Ovary (tissue), 10 donors: ENCODE measurements at regions of chr2 and their contacts with region 1.

Region 1: GRCh38 chr2:69012310-69013141 is 453 bp upstream of the ANTXR1 start:
- DNase-seq: peak; percentile 80 to 89 (median 87)
- H3K4me3 ChIP-seq: peak overlapping the region; percentile 88
- H3K27ac ChIP-seq: peak overlapping the region; percentile 64 to 86
- H3K4me1 ChIP-seq: peaks cover 6% of the 10 kb centered on the region
- H3K27me3 ChIP-seq: no peaks in the 10 kb centered on the region
- CTCF ChIP-seq: peak; percentile 22 to 88 (median 82)
- EP300 ChIP-seq: no peak
- POLR2A ChIP-seq: no peak

Region 2: DNA sequence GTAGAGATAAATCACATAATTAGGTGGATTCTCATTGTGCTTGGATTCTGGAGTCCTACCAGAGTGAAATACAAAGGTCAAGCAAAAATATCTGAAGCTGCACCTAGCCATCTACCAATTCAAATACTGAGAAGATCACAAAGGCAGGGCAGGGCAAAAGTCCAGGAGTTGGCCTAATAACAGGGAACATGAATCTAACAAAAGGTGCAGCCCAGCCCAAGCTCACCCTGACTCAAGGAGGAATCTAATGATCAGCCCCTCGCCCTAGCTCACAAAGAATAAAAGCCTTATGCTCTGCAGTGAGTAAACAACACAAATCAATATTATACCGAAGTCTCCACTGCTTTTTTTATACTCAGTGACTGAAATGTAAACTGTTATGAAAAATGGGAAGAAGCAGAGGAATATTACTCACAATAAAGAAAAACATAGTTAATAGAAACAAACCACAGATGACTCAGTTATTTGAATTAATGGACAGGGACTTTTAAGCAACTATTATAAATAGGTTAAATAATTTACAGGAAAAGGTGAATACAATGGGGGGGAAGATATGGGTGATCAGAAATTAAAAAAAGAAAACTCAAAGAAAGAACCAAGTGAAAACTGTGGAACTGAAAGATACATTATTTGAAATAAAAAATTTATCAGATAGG is 49.9 kb after region 1 on chr2:
- intact Hi-C with region 1: loop called in 1 of 4 experiments (anchors 2 kb)
- DNase-seq: no peak
- H3K4me3 ChIP-seq: no peak overlapping the region
- H3K27ac ChIP-seq: no peak overlapping the region
- H3K4me1 ChIP-seq: peaks cover 12% of the 10 kb centered on the region
- H3K27me3 ChIP-seq: no peaks in the 10 kb centered on the region
- CTCF ChIP-seq: no peak
- EP300 ChIP-seq: no peak
- POLR2A ChIP-seq: no peak

Region 3: DNA sequence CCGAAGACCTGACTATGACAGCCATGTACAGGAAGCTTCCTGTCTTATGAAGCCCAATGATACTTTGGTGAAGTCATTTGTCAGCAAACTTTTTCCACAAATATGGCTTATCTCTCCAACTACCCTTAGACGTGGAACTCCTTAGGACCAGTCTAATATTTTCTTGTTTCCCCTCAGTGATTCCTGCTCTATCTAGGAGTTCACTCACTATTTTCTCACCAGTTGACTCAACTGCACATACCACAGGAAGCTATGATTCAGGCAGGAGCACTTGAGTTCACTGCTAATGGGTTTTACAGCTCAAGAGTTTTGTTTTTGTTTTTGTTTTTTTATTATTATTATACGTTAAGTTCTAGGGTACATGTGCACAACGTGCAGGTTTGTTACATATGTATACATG is 109.7 kb after region 1 on chr2:
- intact Hi-C with region 1: loop called in 1 of 4 experiments (anchors 10 kb)
- DNase-seq: no peak
- H3K4me3 ChIP-seq: no peak overlapping the region
- H3K27ac ChIP-seq: no peak overlapping the region
- H3K4me1 ChIP-seq: peaks cover 7% of the 10 kb centered on the region
- H3K27me3 ChIP-seq: no peaks in the 10 kb centered on the region
- CTCF ChIP-seq: no peak
- EP300 ChIP-seq: no peak
- POLR2A ChIP-seq: no peak

Region 4: DNA sequence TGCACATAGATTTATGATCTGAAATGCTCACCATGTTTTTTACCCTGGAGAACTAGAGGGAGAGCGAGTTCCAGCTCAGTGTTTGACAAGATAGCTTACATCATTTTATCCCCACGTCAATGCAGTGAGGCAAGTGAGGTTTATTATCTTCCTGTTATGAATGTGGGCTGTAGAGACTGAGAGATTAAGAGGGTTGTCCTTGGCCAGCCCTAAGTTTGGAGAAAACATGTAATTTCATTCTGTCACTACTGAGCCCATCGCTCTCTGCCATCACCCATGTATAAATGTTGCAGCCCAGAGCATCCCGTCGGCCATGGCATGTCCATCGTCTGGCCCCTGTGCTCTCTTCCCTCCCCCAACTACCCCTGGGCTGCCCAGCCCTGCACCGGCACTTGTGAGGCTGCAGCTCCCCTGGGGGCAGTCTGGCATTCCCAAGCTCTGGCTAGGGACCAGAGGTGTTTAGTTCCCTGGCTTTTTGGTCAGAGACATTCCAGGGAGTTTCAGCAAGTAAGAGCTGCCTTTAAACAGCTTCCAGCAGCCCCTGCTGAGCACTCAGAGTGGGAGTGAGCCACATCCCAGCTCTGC is 137.2 kb after region 1 on chr2:
- intact Hi-C with region 1: loop called in 1 of 4 experiments (anchors 10 kb)
- DNase-seq: peak; percentile 75 to 83 (median 77)
- H3K4me3 ChIP-seq: no peak overlapping the region
- H3K27ac ChIP-seq: peak overlapping the region in 1 of 2 donors; percentile 90
- H3K4me1 ChIP-seq: peaks cover 35% of the 10 kb centered on the region
- H3K27me3 ChIP-seq: no peaks in the 10 kb centered on the region
- CTCF ChIP-seq: no peak
- EP300 ChIP-seq: no peak
- POLR2A ChIP-seq: peak; percentile 8

Region 5: GRCh38 chr2:69200107-69200520 is 187.6 kb after region 1 on chr2:
- intact Hi-C with region 1: loop called in 1 of 4 experiments (anchors 10 kb)
- DNase-seq: peak; percentile 50 to 80 (median 72)
- H3K4me3 ChIP-seq: no peak overlapping the region
- H3K27ac ChIP-seq: peak overlapping the region in 1 of 2 donors; percentile 74
- H3K4me1 ChIP-seq: peaks cover 38% of the 10 kb centered on the region
- H3K27me3 ChIP-seq: no peaks in the 10 kb centered on the region
- CTCF ChIP-seq: no peak
- EP300 ChIP-seq: no peak
- POLR2A ChIP-seq: no peak

Region 6: DNA sequence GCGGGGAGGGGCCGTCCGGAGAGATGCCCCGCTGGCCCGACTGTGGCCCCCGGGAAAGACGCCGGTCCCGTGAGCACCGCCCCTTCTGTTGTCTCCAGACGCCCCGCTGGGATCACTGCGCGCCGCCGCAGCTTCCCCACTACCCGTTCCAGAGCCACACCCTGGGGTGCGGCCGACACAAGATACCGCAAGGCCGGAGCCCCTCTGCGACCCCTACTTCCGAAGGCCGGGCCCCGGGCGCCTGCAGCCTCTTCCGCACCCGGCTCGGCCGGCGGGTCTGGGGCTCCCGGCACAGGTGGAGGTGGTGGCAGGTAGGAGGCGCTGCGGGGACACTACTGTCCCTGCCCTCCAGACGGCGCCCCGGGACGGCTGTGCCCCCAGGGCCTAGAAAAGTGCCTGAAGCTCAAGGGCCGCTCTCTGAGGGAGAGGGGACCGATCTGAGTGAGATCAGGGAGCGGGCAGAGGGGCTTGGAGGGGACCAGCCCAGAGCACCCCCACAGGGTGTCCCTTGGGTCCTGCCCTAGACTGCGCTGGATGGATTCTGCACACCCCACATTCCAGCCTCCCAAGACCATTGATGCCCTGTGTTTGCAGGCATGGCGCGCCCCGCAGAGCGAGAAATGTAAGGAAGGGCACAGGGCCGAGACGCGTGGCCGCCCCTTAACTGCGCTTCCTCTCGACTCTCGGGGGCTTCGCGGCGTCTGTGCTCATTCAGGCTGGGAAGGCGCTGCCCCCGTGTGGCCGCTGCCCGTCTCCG is 294.5 kb after region 1 on chr2:
- intact Hi-C with region 1: loop called (anchors 1 to 5 kb)
- DNase-seq: peak; percentile 85 to 93 (median 91)
- H3K4me3 ChIP-seq: peak overlapping the region; percentile 56
- H3K27ac ChIP-seq: peak overlapping the region; percentile 61 to 70
- H3K4me1 ChIP-seq: peaks cover 11% of the 10 kb centered on the region
- H3K27me3 ChIP-seq: no peaks in the 10 kb centered on the region
- CTCF ChIP-seq: peak; percentile 80 to 92 (median 82)
- EP300 ChIP-seq: no peak
- POLR2A ChIP-seq: peak; percentile 46